ENCODE measurements at regions of chr3 and their contacts with region 1.

Region 1: DNA sequence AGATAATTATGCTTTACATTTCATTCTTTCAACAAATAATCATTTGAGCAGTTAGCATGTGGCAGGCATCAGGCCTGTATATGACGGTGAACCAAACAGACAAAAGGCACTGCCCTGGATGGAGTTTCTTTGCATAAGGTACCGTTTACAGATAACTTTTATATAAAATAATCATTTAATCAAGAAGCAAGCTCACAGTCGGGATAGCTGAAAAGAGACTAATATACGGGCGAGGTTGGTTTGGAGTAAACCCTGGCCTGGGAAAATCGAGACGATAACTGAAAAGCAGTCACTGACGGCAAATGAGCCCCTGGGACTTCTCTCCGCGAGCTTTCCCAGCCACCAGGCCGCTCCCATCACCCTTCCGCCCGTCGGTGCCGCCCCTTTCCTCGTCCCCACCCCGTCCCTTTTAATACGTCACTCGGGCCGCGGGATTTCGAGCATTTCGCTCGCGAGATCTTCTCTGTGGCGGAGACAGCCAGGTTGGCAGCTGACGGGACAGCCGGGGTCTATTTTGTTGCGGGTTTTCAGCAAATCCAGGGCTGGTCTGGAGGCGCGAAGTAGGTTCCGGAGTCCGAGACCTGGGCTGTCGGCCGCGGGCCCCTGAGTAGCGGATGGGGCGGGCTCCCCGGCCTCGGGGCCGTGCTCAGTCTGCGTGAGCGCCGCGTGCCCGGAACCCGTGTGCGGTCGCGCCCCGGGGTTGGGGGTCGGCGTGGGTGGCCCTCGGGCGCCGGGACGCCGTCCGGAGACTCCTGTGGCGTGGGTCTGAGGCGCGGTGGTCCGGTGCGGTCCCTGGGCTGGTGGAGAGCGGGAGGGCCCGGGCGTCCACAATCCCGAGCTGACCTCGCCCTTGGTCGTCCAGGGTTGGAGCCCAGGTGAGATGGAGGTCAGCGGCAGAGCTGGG is at the start of gene NMD3:
- DNase-seq: peak; percentile 82
- ATAC-seq: peak; percentile 99
- H3K4me3 ChIP-seq: peak within 1 kb of the TSS; percentile 73 to 88
- H3K27ac ChIP-seq: peak within 1 kb of the TSS; percentile 99
- H3K4me1 ChIP-seq: peaks cover 14% of the 10 kb centered on the region
- H3K27me3 ChIP-seq: no peaks in the 10 kb centered on the region
- CTCF ChIP-seq: no peak
- total RNA-seq, gene NMD3: 64.6 TPM

Region 2: DNA sequence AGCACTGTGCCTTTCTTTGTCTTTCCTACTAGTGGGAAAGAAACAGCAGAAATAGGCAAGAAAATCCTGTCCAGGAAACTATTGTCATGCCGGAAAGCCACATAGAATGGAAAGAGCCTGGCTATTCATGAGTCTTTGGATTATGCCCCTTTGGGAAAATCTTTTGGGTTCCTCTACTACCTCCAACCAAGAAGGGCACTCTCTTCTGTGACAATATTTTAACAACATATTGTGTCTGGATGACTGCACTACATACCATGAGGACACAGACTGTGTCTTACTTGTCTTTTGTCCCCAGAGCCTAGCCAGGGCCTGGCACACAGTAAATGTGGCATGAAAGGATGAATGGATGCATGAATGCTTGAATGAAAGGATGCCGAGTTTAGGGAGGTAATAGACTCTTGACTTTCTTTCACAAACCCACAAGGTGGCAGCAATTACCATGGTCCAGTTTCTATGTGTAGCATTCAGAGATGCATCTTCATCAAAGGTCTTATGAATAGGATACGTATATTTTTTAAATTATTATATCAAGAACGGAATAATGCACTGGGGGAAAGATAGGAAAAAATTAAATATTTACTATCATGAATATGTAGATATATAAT is 513.8 kb before region 1 on chr3:
- CTCF ChIA-PET with region 1: no interaction called
- POLR2A ChIA-PET with region 1: no interaction called
- in situ Hi-C with region 1: no loop called
- intact Hi-C with region 1: loop called (anchors 10 kb)
- DNase-seq: peak; percentile 38
- ATAC-seq: peak; percentile 97
- H3K4me3 ChIP-seq: no peak overlapping the region
- H3K27ac ChIP-seq: peak overlapping the region; percentile 3; the same call in 1 of the 2 replicates
- H3K4me1 ChIP-seq: no peaks in the 10 kb centered on the region
- H3K27me3 ChIP-seq: no peaks in the 10 kb centered on the region; the same call in 1 of the 2 replicates
- CTCF ChIP-seq: peak; percentile 81

Region 3: DNA sequence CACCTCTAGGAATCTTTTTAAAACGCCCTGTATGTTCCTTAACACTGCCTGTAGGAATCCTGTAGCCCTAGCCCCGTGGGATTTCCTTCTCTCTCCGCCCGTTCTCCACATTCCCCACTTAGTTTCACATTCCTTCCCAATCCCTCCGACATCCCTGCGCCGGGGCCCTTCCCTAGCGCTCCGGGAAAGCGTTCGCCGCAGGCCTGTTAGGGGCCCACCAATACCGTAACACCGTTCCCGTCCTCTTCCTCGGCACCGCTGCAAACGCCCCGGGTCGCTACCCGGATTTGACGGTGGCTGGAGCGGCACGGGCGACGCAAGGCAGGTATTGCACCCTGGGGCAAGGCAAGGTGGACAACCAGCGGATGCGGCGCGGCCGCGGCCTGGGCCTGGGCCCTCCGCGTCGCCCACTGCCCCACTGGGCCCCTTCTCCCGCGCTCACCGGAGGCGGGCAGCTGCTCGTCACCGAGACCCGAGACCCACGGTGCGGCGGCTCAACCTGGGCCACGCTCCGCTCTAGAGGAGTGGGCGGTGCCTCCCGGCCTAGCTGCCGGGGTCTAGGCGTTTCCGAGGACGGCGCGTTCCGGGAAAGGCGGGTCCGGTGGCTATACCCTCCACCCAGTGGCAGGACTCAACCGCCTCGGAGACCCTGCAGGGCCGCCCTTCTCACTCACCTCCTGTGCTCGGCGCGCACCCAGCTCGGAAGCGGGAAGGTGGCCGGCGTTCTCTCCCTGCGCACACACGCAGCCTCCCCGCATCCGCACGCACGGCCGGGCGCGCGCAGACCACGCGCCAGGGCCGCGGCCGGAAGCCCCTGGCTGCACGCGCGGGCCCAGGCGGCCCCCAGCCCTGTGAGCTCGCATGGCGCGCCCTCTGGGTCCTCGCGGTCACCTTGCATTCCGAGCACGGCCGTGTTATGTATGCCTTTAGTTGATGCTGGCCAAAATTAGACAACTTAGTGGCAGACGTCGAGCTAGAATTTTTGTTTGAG is 116.2 kb before region 1 on chr3 and contains the start of gene B3GALNT1:
- CTCF ChIA-PET with region 1: no interaction called
- POLR2A ChIA-PET with region 1: no interaction called
- in situ Hi-C with region 1: no loop called
- intact Hi-C with region 1: loop called (anchors 5 kb)
- DNase-seq: peak; percentile 7
- ATAC-seq: peak; percentile 96
- H3K4me3 ChIP-seq: peak within 1 kb of the TSS; percentile 67 to 72
- H3K27ac ChIP-seq: peak within 1 kb of the TSS; percentile 87
- H3K4me1 ChIP-seq: peaks cover 6% of the 10 kb centered on the region
- H3K27me3 ChIP-seq: no peaks in the 10 kb centered on the region
- CTCF ChIP-seq: no peak
- total RNA-seq, gene B3GALNT1: 31.1 TPM

Region 4: GRCh38 chr3:161274719-161275298 is 53.7 kb after region 1 on chr3:
- CTCF ChIA-PET with region 1: no interaction called
- POLR2A ChIA-PET with region 1: no interaction called
- in situ Hi-C with region 1: no loop called
- intact Hi-C with region 1: no loop called
- DNase-seq: no peak
- ATAC-seq: no peak
- H3K4me3 ChIP-seq: no peak overlapping the region
- H3K27ac ChIP-seq: no peak overlapping the region
- H3K4me1 ChIP-seq: no peaks in the 10 kb centered on the region
- H3K27me3 ChIP-seq: no peaks in the 10 kb centered on the region
- CTCF ChIP-seq: peak; percentile 66

Measured in Panc1 (cell line).